ENCODE measurements at regions of chr12 and their contacts with region 1.

Region 1: GRCh38 chr12:116217045-116217735 is 60.3 kb downstream of the MED13L start:
- H3K4me3 Mint-ChIP-seq: no peak overlapping the region
- H3K27ac Mint-ChIP-seq: peak overlapping the region; percentile 19
- H3K4me1 Mint-ChIP-seq: peaks cover 46% of the 10 kb centered on the region
- H3K27me3 Mint-ChIP-seq: no peaks in the 10 kb centered on the region

Region 2: GRCh38 chr12:116183741-116184141 is 33.4 kb before region 1 on chr12:
- intact Hi-C with region 1: loop called (anchors 5 kb)
- H3K4me3 Mint-ChIP-seq: no peak overlapping the region
- H3K27ac Mint-ChIP-seq: no peak overlapping the region
- H3K4me1 Mint-ChIP-seq: peaks cover 66% of the 10 kb centered on the region
- H3K27me3 Mint-ChIP-seq: no peaks in the 10 kb centered on the region

Region 3: GRCh38 chr12:116358893-116359761 is 141.9 kb after region 1 on chr12:
- intact Hi-C with region 1: no loop called
- H3K4me3 Mint-ChIP-seq: peak overlapping the region; percentile 50
- H3K27ac Mint-ChIP-seq: peak overlapping the region; percentile 83
- H3K4me1 Mint-ChIP-seq: peaks cover 45% of the 10 kb centered on the region
- H3K27me3 Mint-ChIP-seq: peaks cover 2% of the 10 kb centered on the region

Measured in dendritic cell treated with granulocyte-macrophage colony-stimulating factor and Interleukin-4, amounts not matched to agents 40 ng/mL and 50 ng/mL, for 4 days (primary cell).